Mammary epithelial cell (primary cell): ENCODE measurements at regions of chr13 and their contacts with region 1.

Region 1: DNA sequence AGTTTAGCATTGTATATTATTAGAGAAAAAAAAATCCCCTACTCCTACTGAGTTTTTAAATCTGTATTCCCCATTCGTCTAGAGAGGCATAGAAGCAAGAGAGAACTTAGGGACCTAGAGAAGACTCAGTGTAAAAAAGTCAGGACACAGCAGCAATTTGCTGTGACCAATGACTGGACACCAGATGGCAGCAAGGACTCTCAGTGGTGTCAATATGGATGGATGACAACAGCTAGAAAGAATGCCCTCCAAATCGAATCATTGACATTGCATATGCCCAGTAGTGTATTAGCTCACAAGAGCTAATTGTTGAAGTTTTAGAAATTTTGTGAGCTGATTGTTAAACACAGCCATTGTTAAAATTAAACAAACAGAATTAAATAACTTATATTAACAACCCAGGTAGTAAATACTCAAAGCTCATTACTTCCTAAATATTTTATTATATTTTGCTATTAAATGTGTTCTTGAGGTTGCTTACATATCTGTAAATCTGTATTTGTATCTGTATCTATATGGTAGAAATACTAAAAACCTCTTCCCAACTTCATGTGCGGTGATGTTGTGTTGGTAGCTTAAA is 43.9 kb downstream of the SIAH3 start:
- DNase-seq: peak; percentile 61
- H3K4me3 ChIP-seq: no peak overlapping the region
- H3K27ac ChIP-seq: no peak overlapping the region
- H3K4me1 ChIP-seq: peaks cover 15% of the 10 kb centered on the region
- H3K27me3 ChIP-seq: peaks cover 2% of the 10 kb centered on the region
- CTCF ChIP-seq: peak; percentile 78 to 81

Region 2: GRCh38 chr13:45102136-45102507 is 705.5 kb before region 1 on chr13:
- CTCF ChIA-PET with region 1: no interaction called
- dilution Hi-C with region 1: no loop called
- in situ Hi-C with region 1: no loop called
- intact Hi-C with region 1: no loop called
- DNase-seq: no peak
- H3K4me3 ChIP-seq: no peak overlapping the region
- H3K27ac ChIP-seq: no peak overlapping the region
- H3K4me1 ChIP-seq: no peaks in the 10 kb centered on the region
- H3K27me3 ChIP-seq: no peaks in the 10 kb centered on the region
- CTCF ChIP-seq: no peak

Region 3: DNA sequence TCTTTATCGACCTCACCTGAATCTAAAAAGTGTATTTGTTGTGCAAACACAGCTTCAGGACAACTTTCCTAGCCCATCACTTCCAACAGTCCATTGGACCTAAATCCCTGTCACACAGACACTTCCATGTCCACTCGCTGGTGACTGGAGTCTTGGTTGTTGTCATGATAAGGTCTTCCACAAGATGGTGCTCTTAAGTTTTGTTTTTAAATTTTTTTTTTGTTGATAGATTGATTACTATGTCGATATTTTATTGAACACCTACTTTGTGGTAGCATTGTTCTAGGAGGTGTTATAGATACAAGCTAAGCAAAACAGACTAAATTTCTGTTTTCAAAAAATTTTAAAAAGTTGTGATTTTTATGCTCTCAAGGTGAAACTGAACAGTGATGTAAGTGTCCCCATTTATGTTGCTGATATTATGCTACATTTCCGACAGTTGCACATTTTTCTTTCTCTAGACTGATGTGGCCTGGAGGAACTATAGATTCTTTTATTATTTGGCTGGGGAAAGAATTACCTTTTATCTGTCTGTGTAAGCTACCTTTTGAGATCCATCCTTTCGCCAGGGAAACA is 184.0 kb before region 1 on chr13:
- CTCF ChIA-PET with region 1: no interaction called
- dilution Hi-C with region 1: no loop called
- in situ Hi-C with region 1: no loop called
- intact Hi-C with region 1: loop called (anchors 10 kb)
- DNase-seq: no peak
- H3K4me3 ChIP-seq: no peak overlapping the region
- H3K27ac ChIP-seq: no peak overlapping the region
- H3K4me1 ChIP-seq: no peaks in the 10 kb centered on the region
- H3K27me3 ChIP-seq: peaks cover 4% of the 10 kb centered on the region
- CTCF ChIP-seq: peak; percentile 35 to 60

Region 4: GRCh38 chr13:46010148-46010547 is 202.5 kb after region 1 on chr13:
- CTCF ChIA-PET with region 1: no interaction called
- dilution Hi-C with region 1: no loop called
- in situ Hi-C with region 1: no loop called
- intact Hi-C with region 1: loop called (anchors 2 kb)
- DNase-seq: no peak
- H3K4me3 ChIP-seq: no peak overlapping the region
- H3K27ac ChIP-seq: no peak overlapping the region
- H3K4me1 ChIP-seq: peaks cover 4% of the 10 kb centered on the region
- H3K27me3 ChIP-seq: no peaks in the 10 kb centered on the region
- CTCF ChIP-seq: peak; percentile 18 to 47

Region 5: DNA sequence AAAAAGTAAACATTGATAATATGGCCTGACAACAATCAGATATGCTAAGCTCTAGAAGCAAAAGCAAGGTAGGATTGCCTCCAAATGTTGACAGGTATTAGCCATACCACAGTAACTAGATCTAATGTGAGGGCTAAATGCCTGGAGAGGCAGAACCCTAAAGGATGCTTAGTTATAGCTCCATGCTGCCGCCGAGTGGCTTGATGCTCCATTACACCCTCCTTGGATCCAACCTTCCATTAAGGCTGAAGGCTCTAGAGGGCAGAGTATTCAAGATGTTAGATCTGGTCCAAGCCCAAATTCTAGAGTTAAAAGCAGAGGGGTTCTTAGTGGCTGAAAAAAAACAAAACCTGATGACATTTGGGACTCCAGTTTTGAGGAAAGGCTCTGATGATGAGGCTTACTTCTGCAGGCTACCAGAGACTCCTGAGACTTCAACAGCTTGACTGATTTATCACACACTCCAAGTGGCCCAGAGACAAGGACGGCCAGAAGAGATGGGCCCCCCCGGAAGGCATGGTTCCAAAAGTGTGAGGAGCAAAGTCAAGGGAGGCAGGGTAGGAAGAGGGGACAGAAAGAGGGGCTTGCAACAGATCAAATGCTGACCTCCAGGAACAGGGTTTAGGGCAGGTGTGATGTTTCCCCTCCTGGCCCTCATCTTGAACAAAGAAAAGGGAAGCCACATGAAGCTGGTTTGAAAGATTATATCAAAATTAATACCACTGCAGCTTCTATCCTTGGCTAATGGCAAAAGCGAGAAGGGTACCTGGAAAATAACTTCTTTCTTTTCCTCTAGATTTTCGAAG is 319.1 kb after region 1 on chr13:
- CTCF ChIA-PET with region 1: interaction called, 4 read pairs
- dilution Hi-C with region 1: no loop called
- in situ Hi-C with region 1: loop called in 1 of 2 experiments (anchors 5 kb)
- intact Hi-C with region 1: loop called (anchors 1 kb)
- DNase-seq: peak; percentile 74
- H3K4me3 ChIP-seq: no peak overlapping the region
- H3K27ac ChIP-seq: no peak overlapping the region
- H3K4me1 ChIP-seq: peaks cover 6% of the 10 kb centered on the region
- H3K27me3 ChIP-seq: no peaks in the 10 kb centered on the region
- CTCF ChIP-seq: peak; percentile 98

Region 6: DNA sequence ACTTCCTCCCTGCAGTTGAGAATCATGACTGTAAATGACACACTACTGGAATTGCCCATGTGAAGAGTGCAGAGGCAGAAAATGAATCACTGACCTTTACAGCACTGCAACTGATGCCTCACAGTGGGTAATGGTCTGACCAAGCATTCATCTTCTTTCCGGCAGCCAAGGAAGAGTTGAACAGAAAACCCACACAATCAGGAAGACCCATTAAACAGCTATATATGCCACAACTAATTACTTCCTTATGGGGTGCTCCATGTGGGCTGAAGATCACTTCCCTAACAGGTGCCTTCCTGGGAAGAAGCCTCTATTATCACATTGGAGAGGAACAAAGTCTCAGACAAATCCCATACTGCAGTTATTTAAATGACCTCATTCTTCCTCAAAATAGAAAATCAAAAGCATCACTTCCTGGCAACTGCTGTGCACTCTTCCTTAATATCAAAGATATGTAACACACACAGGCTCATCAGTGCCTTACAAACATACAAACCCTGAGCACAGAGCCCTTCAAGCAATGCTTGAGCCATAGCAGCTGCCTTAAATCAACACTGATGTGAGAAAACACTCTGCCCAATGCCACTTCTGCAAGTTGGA is 533.6 kb after region 1 on chr13:
- CTCF ChIA-PET with region 1: no interaction called
- dilution Hi-C with region 1: no loop called
- in situ Hi-C with region 1: loop called in 1 of 2 experiments (anchors 25 kb)
- intact Hi-C with region 1: no loop called
- DNase-seq: peak; percentile 79
- H3K4me3 ChIP-seq: no peak overlapping the region
- H3K27ac ChIP-seq: no peak overlapping the region
- H3K4me1 ChIP-seq: peaks cover 5% of the 10 kb centered on the region
- H3K27me3 ChIP-seq: no peaks in the 10 kb centered on the region
- CTCF ChIP-seq: no peak